Activated CD4-positive, alpha-beta T cell treated with anti-CD3 and anti-CD28 coated beads, Interleukin-2, amount 10 ng/mL, durations not matched to agents 24 days and 14 days (primary cell): ENCODE measurements at regions of chr11 and their contacts with region 1.

Region 1: GRCh38 chr11:65637794-65638317 is at the start of gene SIPA1:
- DNase-seq: peak; percentile 95
- H3K4me3 Mint-ChIP-seq: peak within 1 kb of the TSS; percentile 84
- H3K27ac Mint-ChIP-seq: peak within 1 kb of the TSS; percentile 89
- H3K4me1 Mint-ChIP-seq: peaks cover 31% of the 10 kb centered on the region
- H3K27me3 Mint-ChIP-seq: no peaks in the 10 kb centered on the region
- total RNA-seq, gene SIPA1: 118 and 125 TPM in 2 replicates

Region 2: DNA sequence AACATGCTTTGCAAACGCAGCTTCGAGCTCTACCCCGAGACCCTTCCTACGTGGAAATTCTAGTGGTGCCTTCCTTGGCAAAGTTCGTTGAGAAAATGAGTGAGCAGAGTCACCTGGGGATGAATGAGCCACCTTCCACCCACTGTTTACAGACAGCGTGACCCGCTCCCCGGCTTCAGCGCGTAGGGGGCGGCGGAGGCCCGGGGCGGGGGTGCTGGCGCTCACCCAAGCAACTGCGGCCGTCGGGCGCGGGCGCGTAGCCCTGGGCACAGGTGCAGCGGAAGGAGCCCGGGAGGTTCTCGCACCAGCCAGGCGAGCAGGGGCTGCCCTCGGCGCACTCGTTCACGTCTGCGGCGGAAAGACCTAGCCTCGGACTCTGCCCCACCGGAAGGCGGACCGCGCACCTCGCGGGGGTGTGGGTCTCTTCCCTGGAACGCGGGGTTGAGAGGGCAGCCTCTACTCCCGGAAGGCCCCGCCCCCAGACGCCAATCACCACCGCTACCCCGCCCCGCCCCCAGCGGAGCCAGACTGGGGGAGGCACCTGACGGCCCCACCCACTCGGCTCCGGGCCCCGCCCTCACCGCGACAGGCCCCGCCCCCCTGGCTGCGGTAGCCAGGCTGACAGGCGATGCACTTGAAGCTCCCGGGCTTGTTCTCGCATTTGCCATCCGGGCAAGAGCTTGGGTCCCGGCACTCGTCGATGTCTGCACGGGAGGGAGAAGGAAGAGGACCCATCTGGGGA is 91.5 kb before region 1 on chr11:
- intact Hi-C with region 1: no loop called
- DNase-seq: peak; percentile 100
- H3K4me3 Mint-ChIP-seq: peak overlapping the region; percentile 79
- H3K27ac Mint-ChIP-seq: peak overlapping the region; percentile 83
- H3K4me1 Mint-ChIP-seq: peaks cover 40% of the 10 kb centered on the region
- H3K27me3 Mint-ChIP-seq: no peaks in the 10 kb centered on the region

Region 3: DNA sequence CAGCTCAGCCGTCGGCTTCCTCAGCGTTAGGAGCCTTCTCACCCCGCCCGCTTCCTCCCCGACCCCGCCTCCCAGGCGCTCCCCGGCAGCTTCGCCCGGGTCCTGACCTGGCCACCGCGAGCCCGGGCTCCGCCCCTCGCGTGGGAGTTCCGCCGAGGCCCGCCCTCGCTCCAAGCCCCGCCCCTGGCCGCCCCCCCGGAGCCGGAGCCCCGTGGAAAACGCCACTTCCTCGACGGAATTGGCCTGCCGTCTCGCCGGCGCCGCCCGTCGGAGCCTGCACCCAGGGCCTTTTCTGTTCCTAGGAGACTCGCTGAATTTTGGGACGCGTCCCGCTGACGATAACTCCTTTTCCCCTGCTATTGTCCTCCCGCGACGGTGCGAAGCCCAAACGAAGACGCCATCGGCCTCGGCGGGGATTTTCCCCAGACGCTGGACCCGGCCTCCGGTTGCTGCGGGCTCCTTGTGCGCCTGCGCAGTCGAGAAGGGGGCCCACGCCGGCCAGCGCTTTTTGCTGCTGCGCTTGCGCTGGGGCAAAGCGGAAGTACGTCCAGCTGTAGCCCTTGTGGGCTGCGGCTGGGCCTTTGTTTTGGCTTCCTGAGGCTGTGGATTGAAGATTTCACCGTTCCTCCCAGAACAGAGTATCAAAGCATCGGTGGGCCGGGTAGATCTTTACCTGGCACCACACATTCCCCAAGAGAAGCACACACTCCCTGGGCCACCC is 14.8 kb after region 1 on chr11:
- intact Hi-C with region 1: loop called (anchors 1 kb)
- DNase-seq: peak; percentile 99
- H3K4me3 Mint-ChIP-seq: peak overlapping the region; percentile 86
- H3K27ac Mint-ChIP-seq: peak overlapping the region; percentile 94
- H3K4me1 Mint-ChIP-seq: peaks cover 33% of the 10 kb centered on the region
- H3K27me3 Mint-ChIP-seq: no peaks in the 10 kb centered on the region

Region 4: GRCh38 chr11:65662799-65663638 is 25.2 kb after region 1 on chr11 and contains the start of gene RELA:
- intact Hi-C with region 1: loop called (anchors 1 kb)
- DNase-seq: peak; percentile 97
- H3K4me3 Mint-ChIP-seq: peak within 1 kb of the TSS; percentile 92
- H3K27ac Mint-ChIP-seq: peak within 1 kb of the TSS; percentile 93
- H3K4me1 Mint-ChIP-seq: peaks cover 24% of the 10 kb centered on the region
- H3K27me3 Mint-ChIP-seq: no peaks in the 10 kb centered on the region
- total RNA-seq, gene RELA: 95.7 and 98.2 TPM in 2 replicates